GM10248 (cell line): ENCODE measurements at regions of chr17 and their contacts with region 1.

Region 1: DNA sequence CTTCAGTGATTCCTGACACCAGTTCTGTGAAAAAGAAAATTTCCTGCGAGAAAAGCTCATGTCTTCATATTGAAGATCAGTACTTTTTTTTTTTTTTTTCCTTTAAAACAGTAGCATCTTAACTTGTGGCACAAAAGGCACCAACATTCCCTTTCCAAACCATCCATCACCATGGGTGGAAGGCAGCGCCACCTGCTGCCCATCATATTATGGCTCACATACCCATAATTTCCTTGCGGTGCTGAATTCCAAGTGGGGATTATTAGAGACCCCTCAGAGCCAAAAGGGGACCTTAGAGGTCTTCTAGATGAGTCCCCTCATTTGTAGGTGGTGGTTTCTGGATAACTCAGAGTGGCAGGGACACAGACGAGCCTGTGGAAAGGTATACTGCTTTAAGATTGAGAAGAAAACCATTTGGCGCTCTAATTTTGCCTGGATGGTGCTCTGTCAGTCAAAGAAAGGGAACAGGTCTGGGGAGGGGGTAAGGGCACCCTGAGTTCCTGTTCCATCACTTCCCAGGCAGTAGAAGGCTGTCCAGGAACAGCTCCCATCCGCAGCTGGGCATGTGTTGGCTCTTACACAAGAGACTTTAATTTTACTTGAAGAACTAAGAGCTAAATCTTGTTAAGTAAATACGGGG is 7.9 kb upstream of the SOST start:
- DNase-seq: no peak
- CTCF ChIP-seq: peak; percentile 75

Region 2: DNA sequence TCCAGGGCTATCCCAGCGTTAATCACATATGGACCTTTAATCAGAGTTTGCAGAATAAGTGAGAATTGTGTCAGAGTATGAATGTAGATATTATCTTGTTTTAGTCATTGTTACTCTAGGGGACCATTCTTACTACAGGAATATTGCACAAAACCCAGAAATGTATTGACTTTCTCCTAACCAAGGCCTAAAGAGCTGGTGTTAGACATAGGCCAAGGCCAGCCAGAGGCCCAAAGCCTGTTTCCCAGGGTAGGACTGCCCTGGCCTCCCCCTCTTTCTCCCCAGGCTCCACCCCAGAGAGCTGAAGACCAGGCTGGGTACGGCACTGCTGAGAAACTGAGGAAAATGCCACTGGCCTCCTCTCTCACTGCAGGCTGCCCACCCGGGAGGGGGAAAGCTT is 62.9 kb before region 1 on chr17:
- CTCF ChIA-PET with region 1: interaction called, 503 read pairs
- POLR2A ChIA-PET with region 1: no interaction called
- DNase-seq: no peak
- CTCF ChIP-seq: no peak

Region 3: DNA sequence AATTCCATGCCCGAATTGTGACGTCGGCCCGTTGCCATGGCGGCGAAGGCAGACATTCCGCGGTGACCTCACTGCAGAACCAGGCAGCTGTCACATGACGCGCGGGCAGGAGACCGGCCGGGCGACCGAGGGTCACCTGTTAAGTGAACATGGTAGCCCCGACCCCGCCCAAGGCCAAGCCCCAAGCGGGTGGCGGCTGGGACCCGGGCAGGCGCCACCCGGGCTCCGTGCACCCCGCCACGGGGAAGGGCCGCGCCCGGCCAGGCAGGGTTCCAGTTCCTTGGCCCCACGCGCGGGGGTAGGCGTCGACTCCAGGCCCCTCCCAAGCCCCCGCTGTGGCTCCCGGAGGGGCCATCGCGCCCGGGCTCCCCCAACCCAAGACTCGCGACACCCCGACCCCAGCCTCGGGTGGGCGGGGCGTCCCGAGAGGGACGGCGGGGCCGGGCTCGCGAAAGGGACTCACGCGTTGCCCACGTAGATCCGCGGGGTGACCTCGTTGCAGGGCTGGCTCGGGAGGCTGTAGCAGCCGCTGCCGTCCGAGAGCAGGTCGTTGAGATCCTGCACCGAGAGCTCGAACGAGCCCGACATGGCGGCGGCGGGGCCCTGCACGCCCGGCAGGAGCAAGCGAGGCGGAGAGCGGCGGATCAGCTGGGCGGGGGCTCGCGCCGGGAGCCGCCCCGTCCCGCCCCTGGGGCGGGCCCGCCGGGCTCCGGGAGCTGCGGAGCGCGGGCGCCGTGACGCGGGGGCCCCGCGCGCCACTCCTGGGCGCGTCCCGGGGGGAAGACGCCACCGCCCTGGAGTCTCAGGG is 12.0 kb after region 1 on chr17 and contains the start of gene DUSP3:
- CTCF ChIA-PET with region 1: interaction called, 45 read pairs
- POLR2A ChIA-PET with region 1: no interaction called
- DNase-seq: peak; percentile 95
- CTCF ChIP-seq: no peak